GM12878 (cell line): ENCODE measurements at regions of chr6 and their contacts with region 1.

Region 1: GRCh38 chr6:100664274-100665040 is 199.7 kb upstream of the SIM1 start:
- DNase-seq: no peak
- ATAC-seq: peak; percentile 65
- H3K4me3 ChIP-seq: no peak overlapping the region
- H3K27ac ChIP-seq: peak overlapping the region; percentile 26; the same call in 1 of the 2 replicates
- H3K4me1 ChIP-seq: peaks cover 11% of the 10 kb centered on the region
- H3K27me3 ChIP-seq: no peaks in the 10 kb centered on the region
- CTCF ChIP-seq: peak; percentile 48 to 62 (median 50); a peak in 5 of 6 replicates
- EP300 ChIP-seq: no peak
- POLR2A ChIP-seq: no peak
- RAD21 ChIP-seq: peak; percentile 48

Region 2: GRCh38 chr6:100176311-100176950 is 488.0 kb before region 1 on chr6:
- CTCF ChIA-PET with region 1: interaction called, 12 read pairs
- POLR2A ChIA-PET with region 1: no interaction called
- RAD21 ChIA-PET with region 1: no interaction called
- SMC1A ChIA-PET with region 1: no interaction called
- in situ Hi-C with region 1: no loop called
- intact Hi-C with region 1: no loop called
- DNase-seq: no peak
- ATAC-seq: peak; percentile 49
- H3K4me3 ChIP-seq: no peak overlapping the region
- H3K27ac ChIP-seq: no peak overlapping the region
- H3K4me1 ChIP-seq: no peaks in the 10 kb centered on the region
- H3K27me3 ChIP-seq: no peaks in the 10 kb centered on the region
- CTCF ChIP-seq: peak in 2 of 3 experiments; percentile 23 to 29; a peak in 1 of 6 replicates
- EP300 ChIP-seq: no peak
- POLR2A ChIP-seq: no peak
- RAD21 ChIP-seq: peak; percentile 29; the same call in 1 of the 2 replicates

Region 3: DNA sequence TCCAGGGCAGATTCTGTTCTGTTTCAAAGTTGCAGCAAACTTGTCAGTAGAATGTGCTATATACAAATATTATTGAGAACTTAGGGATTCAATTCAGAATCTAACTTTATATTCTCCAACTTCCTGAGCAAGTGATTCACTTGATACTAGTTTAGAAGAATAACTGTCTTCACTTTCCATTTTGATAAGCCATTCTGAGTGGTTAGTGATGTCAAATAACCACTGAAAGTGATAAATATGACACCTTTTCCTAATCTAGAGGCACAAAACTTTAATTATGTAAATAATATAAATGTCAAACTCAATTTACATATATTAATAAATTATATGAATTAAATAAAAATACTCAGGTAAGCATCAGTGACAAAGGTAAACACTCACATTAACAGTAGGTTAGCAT is 179.2 kb before region 1 on chr6:
- CTCF ChIA-PET with region 1: interaction called, 18 read pairs
- POLR2A ChIA-PET with region 1: no interaction called
- RAD21 ChIA-PET with region 1: interaction called, 6 read pairs
- SMC1A ChIA-PET with region 1: interaction called, 7 read pairs
- in situ Hi-C with region 1: no loop called
- intact Hi-C with region 1: no loop called
- DNase-seq: no peak
- ATAC-seq: peak; percentile 23; the same call in 1 of the 3 replicates
- H3K4me3 ChIP-seq: no peak overlapping the region
- H3K27ac ChIP-seq: no peak overlapping the region
- H3K4me1 ChIP-seq: no peaks in the 10 kb centered on the region
- H3K27me3 ChIP-seq: no peaks in the 10 kb centered on the region
- CTCF ChIP-seq: no peak
- EP300 ChIP-seq: no peak
- POLR2A ChIP-seq: no peak
- RAD21 ChIP-seq: no peak

Region 4: GRCh38 chr6:100678027-100678426 is 13.6 kb after region 1 on chr6:
- CTCF ChIA-PET with region 1: interaction called, 21 read pairs
- POLR2A ChIA-PET with region 1: no interaction called
- RAD21 ChIA-PET with region 1: interaction called, 3 read pairs
- SMC1A ChIA-PET with region 1: interaction called, 10 read pairs
- in situ Hi-C with region 1: no loop called
- intact Hi-C with region 1: no loop called
- DNase-seq: no peak
- ATAC-seq: no peak
- H3K4me3 ChIP-seq: no peak overlapping the region
- H3K27ac ChIP-seq: no peak overlapping the region
- H3K4me1 ChIP-seq: no peaks in the 10 kb centered on the region
- H3K27me3 ChIP-seq: no peaks in the 10 kb centered on the region
- CTCF ChIP-seq: no peak; a peak in 1 of 6 replicates
- EP300 ChIP-seq: no peak
- POLR2A ChIP-seq: no peak
- RAD21 ChIP-seq: 0 out of 2 replicates have a peak, but pooled peaks have one; percentile 4

Region 5: GRCh38 chr6:101226626-101227165 is 562.2 kb after region 1 on chr6:
- CTCF ChIA-PET with region 1: no interaction called
- POLR2A ChIA-PET with region 1: no interaction called
- RAD21 ChIA-PET with region 1: interaction called, 3 read pairs
- SMC1A ChIA-PET with region 1: interaction called, 4 read pairs
- in situ Hi-C with region 1: no loop called
- intact Hi-C with region 1: loop called (anchors 10 kb)
- DNase-seq: no peak
- ATAC-seq: peak; percentile 79
- H3K4me3 ChIP-seq: no peak overlapping the region
- H3K27ac ChIP-seq: no peak overlapping the region
- H3K4me1 ChIP-seq: no peaks in the 10 kb centered on the region
- H3K27me3 ChIP-seq: no peaks in the 10 kb centered on the region
- CTCF ChIP-seq: peak; percentile 19 to 54 (median 29); a peak in 4 of 6 replicates
- EP300 ChIP-seq: no peak
- POLR2A ChIP-seq: no peak
- RAD21 ChIP-seq: peak; percentile 47